GM13976 (cell line): ENCODE measurements at regions of chr16 and their contacts with region 1.

Region 1: GRCh38 chr16:15811481-15812400 is 45.1 kb downstream of the MYH11 start:
- DNase-seq: no peak
- CTCF ChIP-seq: no peak

Region 2: GRCh38 chr16:15757630-15758251 is 54.0 kb before region 1 on chr16:
- in situ Hi-C with region 1: loop called (anchors 10 kb)
- DNase-seq: no peak
- CTCF ChIP-seq: no peak

Region 3: DNA sequence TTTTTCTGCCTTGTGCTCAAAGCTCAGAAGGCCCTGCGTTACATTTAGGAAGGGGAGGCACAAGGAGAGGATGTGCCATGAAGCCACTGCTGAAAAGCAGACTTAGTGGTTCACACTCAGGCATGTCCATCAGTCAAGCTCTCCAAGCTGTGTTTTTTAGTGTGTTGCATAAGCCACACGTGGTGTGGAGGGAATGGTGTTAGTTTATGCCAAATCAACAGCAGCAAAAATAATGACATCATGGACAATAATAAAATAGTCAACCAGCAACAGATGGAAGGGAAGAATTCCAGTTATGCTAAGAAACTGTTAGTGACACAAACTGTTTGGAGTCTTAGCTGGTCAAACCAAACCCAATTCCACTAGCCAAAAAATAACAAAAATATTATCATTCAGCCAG is 1005.5 kb after region 1 on chr16:
- in situ Hi-C with region 1: loop called (anchors 25 kb)
- DNase-seq: no peak
- CTCF ChIP-seq: no peak